HEK293 (cell line): ENCODE measurements at regions of chr6 and their contacts with region 1.

Region 1: DNA sequence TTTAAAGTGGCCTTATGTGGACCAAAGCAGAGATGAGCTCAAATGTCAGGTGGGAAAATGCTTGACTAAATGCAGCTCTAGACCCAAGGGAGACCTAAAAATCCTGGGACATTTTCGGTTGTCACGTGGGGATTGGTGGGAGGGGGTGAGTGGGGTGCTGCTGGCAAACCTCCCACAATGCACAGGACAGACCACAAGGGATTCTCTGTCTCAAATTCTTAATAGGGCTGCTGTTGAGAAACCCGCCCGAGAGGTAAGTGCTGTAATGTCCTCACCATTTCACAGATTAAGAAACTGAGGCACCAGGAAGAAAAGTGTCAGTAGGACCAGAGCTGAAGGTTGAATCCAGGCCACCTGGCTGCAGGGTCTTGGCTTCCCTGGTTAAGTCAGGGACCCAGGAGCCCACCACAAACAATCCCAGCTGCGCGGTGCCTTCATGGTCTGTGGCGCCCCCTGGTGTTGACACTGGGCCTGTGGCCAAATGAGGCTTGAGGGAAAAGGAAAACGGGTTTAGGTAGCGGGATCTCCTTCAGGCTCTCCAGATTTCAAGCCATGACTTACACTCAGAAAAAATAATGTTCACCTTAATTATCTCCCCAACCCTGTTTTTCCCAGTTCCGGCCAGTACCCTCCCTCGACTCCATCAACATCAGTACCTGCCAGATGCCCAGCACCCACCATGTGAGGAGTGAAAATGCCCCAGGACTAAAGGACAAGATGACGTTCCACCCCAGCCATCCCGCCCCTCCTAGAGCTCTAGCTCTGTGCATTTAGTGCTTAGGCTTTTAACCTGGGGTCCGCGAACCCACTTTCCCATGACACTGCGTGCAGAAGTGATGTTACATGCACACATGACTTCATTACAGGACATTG is 7.2 kb downstream of the HLA-G start:
- H3K4me3 ChIP-seq: no peak overlapping the region
- H3K27ac ChIP-seq: no peak overlapping the region
- H3K4me1 ChIP-seq: no peaks in the 10 kb centered on the region
- CTCF ChIP-seq: peak; percentile 58; the same call in 1 of the 2 replicates

Region 2: GRCh38 chr6:29696155-29697125 is 138.4 kb before region 1 on chr6:
- CTCF ChIA-PET with region 1: interaction called, 14 read pairs
- POLR2A ChIA-PET with region 1: no interaction called
- H3K4me3 ChIP-seq: no peak overlapping the region
- H3K27ac ChIP-seq: no peak overlapping the region
- H3K4me1 ChIP-seq: no peaks in the 10 kb centered on the region
- CTCF ChIP-seq: peak; percentile 21

Region 3: DNA sequence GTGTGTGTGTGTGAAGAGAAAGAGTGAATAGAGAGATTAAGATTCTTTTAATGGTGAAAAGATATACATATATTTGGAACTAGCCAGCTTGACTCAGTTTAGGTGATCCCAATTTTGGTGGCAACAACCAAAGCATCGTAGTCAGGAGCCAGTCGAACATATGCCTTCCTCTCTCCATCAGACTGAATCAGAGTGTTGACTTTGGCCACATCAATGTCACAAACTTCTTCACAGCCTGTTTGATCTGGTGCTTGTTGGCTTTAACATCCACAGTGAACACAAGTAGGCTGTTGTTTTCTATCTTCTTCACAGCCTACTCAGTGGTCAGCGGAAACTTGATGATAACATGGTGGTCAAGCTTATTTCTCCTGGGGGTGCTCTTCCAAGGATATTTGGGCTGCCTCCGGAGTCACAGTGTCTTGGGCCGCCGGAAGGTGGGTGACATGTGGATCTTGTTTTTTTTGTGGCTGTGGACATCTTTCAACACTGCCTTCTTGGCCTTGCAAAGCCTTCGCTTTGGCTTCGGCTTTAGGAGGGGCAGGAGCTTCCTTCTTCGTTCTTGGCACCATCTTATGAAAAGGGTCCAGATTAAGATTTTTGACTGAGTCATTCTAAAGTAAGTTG is 108.1 kb before region 1 on chr6:
- CTCF ChIA-PET with region 1: interaction called, 10 read pairs
- POLR2A ChIA-PET with region 1: no interaction called
- H3K4me3 ChIP-seq: no peak overlapping the region
- H3K27ac ChIP-seq: no peak overlapping the region
- H3K4me1 ChIP-seq: no peaks in the 10 kb centered on the region; the same call in 1 of the 2 replicates
- CTCF ChIP-seq: no peak

Region 4: GRCh38 chr6:29763491-29764289 is 71.1 kb before region 1 on chr6:
- CTCF ChIA-PET with region 1: interaction called, 11 read pairs
- POLR2A ChIA-PET with region 1: no interaction called
- H3K4me3 ChIP-seq: no peak overlapping the region
- H3K27ac ChIP-seq: no peak overlapping the region
- H3K4me1 ChIP-seq: no peaks in the 10 kb centered on the region
- CTCF ChIP-seq: no peak

Region 5: DNA sequence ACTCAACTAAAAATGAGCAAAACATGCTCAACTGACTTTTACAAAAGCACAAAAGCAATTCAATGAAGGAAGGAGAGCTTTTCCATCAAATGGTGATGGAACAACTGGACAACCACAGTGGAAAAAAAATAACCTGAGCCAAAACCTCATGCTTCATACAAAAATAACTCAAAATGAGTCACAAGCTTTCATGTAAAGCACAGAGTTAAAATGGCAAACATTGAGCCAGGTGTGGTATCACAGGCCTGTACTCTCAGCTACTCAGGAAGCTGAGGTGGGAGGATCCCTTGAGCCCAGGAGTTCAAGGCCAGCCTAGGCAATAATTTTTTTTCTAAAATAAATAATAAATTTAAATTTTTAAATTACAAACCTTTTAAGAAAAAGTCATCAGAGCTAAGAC is 25.6 kb before region 1 on chr6:
- CTCF ChIA-PET with region 1: interaction called, 13 read pairs
- POLR2A ChIA-PET with region 1: no interaction called
- H3K4me3 ChIP-seq: no peak overlapping the region
- H3K27ac ChIP-seq: no peak overlapping the region
- H3K4me1 ChIP-seq: no peaks in the 10 kb centered on the region
- CTCF ChIP-seq: no peak